Naive thymus-derived CD4-positive, alpha-beta T cell (primary cell): ENCODE measurements at regions of chr19 and their contacts with region 1.

Region 1: GRCh38 chr19:3544742-3545668 is 6.0 kb downstream of the TEKTIP1 start:
- DNase-seq: peak; percentile 52 to 89 (median 70)
- ATAC-seq: peak; percentile 77
- H3K4me3 ChIP-seq: no peak overlapping the region
- H3K4me3 Mint-ChIP-seq: peak overlapping the region in 1 of 10 donors; percentile 7
- H3K27ac ChIP-seq: peak overlapping the region; percentile 19
- H3K27ac Mint-ChIP-seq: peak overlapping the region in 8 of 9 donors; percentile 46 to 81 (median 71)
- H3K4me1 ChIP-seq: no peaks in the 10 kb centered on the region
- H3K4me1 Mint-ChIP-seq: peaks cover 4 to 17% (median 11%) of the 10 kb centered on the region in 7 donors
- H3K27me3 ChIP-seq: no peaks in the 10 kb centered on the region
- H3K27me3 Mint-ChIP-seq: no peaks in the 10 kb centered on the region

Region 2: GRCh38 chr19:3302755-3303154 is 242.2 kb before region 1 on chr19:
- CTCF ChIA-PET with region 1: no interaction called
- POLR2A ChIA-PET with region 1: no interaction called
- intact Hi-C with region 1: no loop called
- DNase-seq: no peak
- ATAC-seq: no peak
- H3K4me3 ChIP-seq: no peak overlapping the region
- H3K4me3 Mint-ChIP-seq: no peak overlapping the region
- H3K27ac ChIP-seq: no peak overlapping the region
- H3K27ac Mint-ChIP-seq: no peak overlapping the region
- H3K4me1 ChIP-seq: no peaks in the 10 kb centered on the region
- H3K4me1 Mint-ChIP-seq: peaks cover 0 to 5% (median 2%) of the 10 kb centered on the region in 7 donors
- H3K27me3 ChIP-seq: no peaks in the 10 kb centered on the region
- H3K27me3 Mint-ChIP-seq: peaks cover 0 to 17% (median 12%) of the 10 kb centered on the region in 5 donors

Region 3: DNA sequence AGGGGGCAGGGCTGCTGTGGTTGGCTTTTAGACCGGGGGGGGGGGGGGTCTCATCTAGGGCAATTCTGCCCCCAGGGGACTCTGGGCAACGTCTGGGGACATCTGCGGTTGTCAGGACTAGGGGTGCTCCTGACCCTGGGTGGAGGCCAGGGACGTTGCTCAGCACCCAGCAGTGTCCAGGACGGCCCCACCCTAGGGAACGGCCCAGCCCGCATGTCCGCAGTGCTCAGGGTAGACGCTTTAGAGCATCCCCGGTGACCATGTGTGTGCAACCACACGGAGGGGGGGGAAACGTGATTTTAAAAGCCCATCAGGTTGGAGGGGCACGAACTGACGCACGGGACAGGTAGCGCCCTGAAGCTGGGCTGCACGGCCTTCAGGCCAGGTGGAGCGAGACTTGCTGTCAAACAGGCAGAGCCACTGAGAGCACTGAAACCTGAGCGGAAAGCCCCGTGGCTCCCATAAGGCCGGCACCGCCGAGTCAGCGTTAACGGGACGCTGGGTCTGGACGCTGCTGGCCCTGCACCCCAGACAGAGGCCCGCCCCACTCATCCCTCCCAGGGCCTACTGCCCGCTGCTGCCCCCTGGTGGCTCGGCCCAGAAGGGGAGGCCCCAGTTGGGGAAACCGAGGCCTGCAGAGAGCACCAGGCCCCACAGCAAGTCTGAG is 73.3 kb after region 1 on chr19:
- CTCF ChIA-PET with region 1: interaction called, 5 read pairs
- POLR2A ChIA-PET with region 1: no interaction called
- intact Hi-C with region 1: loop called (anchors 1 kb)
- DNase-seq: peak in 7 of 9 donors; percentile 38 to 71 (median 45)
- ATAC-seq: peak; percentile 82
- H3K4me3 ChIP-seq: no peak overlapping the region
- H3K4me3 Mint-ChIP-seq: peak overlapping the region in 1 of 10 donors; percentile 76
- H3K27ac ChIP-seq: no peak overlapping the region
- H3K27ac Mint-ChIP-seq: no peak overlapping the region
- H3K4me1 ChIP-seq: peaks cover 0 to 13% of the 10 kb centered on the region in 2 donors
- H3K4me1 Mint-ChIP-seq: peaks cover 0 to 22% (median 15%) of the 10 kb centered on the region in 7 donors
- H3K27me3 ChIP-seq: no peaks in the 10 kb centered on the region
- H3K27me3 Mint-ChIP-seq: no peaks in the 10 kb centered on the region

Region 4: DNA sequence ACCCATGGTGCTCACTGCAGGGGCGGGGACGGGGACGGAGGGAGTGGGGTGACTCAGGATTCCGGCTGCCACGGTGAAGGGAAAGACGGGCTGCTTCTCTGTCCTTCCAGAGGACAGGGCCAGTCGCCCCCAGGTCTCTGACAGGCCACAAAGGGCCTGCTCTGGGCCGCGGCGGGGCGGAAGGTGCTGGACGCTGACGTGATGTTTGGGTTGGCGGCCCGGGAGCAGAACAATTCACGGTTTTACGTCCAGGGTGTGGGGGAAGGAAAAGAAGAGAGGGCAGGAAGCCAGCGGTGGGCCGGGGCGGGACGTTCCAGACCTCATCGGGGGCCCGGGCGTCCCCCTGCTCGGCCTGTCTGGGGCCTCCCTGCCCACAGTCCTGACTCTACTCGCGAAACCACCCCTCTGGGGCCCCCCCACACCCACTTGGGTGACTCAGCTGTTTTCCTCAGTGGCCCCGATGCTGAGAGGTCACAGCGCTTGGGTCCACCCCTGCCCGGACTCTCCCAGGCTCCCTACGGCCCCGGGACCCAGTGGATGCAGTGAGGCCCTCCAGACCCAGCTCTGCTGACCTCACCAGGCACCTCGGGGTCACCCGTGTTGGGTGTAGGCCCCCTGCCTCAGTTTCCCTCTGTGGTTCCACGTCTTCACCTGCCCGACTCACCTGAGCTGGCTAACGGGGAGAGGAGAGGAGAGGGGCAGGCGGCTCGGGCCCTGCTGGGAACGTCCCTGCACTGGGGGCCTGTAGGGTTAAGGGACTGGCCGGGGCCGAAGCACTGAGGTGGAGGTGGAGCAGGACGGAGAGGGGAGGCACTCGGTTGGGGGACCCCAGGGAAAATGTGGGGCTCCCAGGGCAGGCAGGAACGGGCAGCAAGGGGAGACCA is 126.0 kb after region 1 on chr19:
- CTCF ChIA-PET with region 1: no interaction called
- POLR2A ChIA-PET with region 1: no interaction called
- intact Hi-C with region 1: no loop called
- DNase-seq: peak in 1 of 9 donors; percentile 49
- ATAC-seq: peak; percentile 72
- H3K4me3 ChIP-seq: no peak overlapping the region
- H3K4me3 Mint-ChIP-seq: peak overlapping the region in 8 of 10 donors; percentile 53 to 81 (median 58)
- H3K27ac ChIP-seq: peak overlapping the region; percentile 3
- H3K27ac Mint-ChIP-seq: peak overlapping the region in 3 of 9 donors; percentile 66 to 77 (median 72)
- H3K4me1 ChIP-seq: peaks cover 9 to 14% of the 10 kb centered on the region in 2 donors
- H3K4me1 Mint-ChIP-seq: peaks cover 5 to 25% (median 21%) of the 10 kb centered on the region in 7 donors
- H3K27me3 ChIP-seq: no peaks in the 10 kb centered on the region
- H3K27me3 Mint-ChIP-seq: no peaks in the 10 kb centered on the region

Region 5: DNA sequence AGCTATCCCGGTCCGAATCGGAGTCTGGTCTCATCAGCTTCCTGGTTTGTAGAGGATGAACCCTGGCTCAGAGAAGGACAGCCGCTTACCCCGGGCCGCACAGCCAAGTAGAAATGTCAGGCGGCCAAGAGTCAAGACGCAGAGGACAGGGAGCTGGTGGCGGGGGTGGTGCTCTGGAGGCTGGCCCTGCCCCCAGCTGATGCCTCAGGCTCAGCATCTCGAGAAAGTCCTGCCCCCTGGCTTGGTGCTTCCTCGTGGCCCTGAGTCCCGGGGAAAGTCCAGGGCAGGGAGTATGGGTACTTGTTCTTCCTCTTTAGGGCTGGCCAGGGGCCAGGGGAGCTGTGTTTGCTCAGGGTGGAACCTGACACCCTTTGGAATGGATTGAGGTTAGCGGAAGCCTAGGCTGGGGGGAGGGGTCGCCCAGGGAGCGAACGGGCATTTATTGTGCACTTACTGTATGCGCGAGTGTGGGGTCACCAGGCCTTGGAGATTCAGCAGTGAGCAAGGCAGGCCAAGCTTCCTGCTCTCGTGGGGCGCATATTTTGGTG is 165.3 kb after region 1 on chr19:
- CTCF ChIA-PET with region 1: no interaction called
- POLR2A ChIA-PET with region 1: no interaction called
- intact Hi-C with region 1: loop called (anchors 1 to 10 kb)
- DNase-seq: no peak
- ATAC-seq: peak; percentile 83
- H3K4me3 ChIP-seq: no peak overlapping the region
- H3K4me3 Mint-ChIP-seq: no peak overlapping the region
- H3K27ac ChIP-seq: no peak overlapping the region
- H3K27ac Mint-ChIP-seq: no peak overlapping the region
- H3K4me1 ChIP-seq: no peaks in the 10 kb centered on the region
- H3K4me1 Mint-ChIP-seq: peaks cover 0 to 12% (median 5%) of the 10 kb centered on the region in 7 donors
- H3K27me3 ChIP-seq: no peaks in the 10 kb centered on the region
- H3K27me3 Mint-ChIP-seq: peaks cover 0 to 11% (median 0%) of the 10 kb centered on the region in 5 donors